ENCODE measurements at regions of chr1 and their contacts with region 1.

Region 1: DNA sequence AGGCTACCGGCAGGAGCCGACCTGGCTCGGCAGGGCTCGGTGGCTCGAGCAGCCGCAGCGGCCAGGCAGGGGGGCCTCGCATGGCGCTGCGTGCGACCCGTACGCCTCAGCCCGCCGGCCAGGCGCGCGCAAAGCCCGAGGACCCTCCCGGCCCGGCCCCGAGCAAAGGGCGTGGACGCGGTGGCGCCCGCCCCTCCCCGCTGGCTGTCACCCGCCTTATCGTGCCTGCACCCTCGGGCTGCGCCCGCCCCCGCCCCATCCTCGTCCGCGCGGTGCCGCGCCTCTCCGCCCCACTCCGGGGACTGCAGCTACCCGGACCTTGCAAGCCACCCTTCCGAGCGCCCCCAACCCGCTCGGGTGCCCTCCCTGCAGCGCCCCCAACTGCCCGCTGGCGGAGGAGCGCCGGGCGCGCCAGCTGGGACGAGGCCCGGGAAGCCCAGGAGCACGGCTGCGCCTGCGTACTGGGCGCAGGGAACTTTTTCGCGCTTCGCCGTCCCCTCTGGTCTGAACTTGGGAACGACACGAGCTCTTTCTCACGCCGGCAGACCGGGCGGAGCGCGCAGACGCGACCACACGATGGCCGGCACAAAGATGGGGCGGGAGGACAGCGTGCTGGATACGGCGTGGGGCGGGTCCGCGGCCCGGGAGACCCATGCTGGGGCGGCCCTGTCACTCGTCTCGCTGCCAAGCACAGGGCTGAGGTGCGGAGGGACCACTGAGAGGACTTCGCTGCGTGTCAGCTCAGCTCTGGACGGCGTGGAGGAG is at the start of gene ABCB10:
- DNase-seq: peak; percentile 98
- H3K4me3 ChIP-seq: peak within 1 kb of the TSS; percentile 72 to 90
- H3K27ac ChIP-seq: peak within 1 kb of the TSS; percentile 65 to 75
- H3K4me1 ChIP-seq: peaks cover 0 to 14% of the 10 kb centered on the region in 2 experiments; a peak in 2 of 4 replicates
- H3K27me3 ChIP-seq: no peaks in the 10 kb centered on the region
- CTCF ChIP-seq: peak; percentile 84
- EP300 ChIP-seq: no peak; a peak in 1 of 4 replicates
- RAD21 ChIP-seq: 0 out of 2 replicates have a peak, but pooled peaks have one; percentile 35
- polyA plus RNA-seq, gene ABCB10: 5.7 and 7.4 TPM in 2 replicates

Region 2: DNA sequence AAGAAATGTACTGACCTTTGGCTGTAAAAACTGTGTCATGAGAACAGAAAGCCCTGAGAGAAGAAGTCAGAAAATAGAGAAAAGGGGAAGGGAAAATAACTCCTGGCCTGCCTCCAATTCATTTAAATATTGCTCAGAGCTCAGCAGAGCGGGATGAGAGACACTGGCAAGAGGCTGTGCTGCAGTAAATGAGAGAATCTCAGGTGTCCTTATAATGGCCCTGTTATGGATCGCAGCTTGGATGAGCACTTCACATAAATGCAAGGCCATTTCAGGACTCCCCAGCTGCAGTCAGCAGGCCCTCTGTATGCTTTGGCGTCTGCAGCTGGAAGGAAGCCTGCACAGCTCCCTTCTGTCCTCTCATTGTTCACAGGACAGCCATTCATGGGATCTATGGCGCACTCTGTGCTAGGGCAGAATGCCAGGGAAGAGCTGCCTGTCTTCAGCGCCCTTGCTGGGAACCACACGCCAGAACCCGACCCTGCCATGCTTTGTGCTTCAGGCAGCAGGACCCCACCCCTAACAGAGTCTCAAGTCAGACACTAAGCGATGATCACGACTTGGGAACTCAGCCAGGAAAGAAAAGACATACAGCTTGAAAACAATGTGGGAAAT is 20.4 kb after region 1 on chr1:
- CTCF ChIA-PET with region 1: interaction called, 12 read pairs
- POLR2A ChIA-PET with region 1: no interaction called
- DNase-seq: peak; percentile 58
- H3K4me3 ChIP-seq: no peak overlapping the region
- H3K27ac ChIP-seq: no peak overlapping the region; a peak in 1 of 4 replicates
- H3K4me1 ChIP-seq: peaks cover 0 to 8% of the 10 kb centered on the region in 2 experiments; a peak in 1 of 4 replicates
- H3K27me3 ChIP-seq: no peaks in the 10 kb centered on the region
- CTCF ChIP-seq: no peak
- EP300 ChIP-seq: no peak
- RAD21 ChIP-seq: no peak

Region 3: DNA sequence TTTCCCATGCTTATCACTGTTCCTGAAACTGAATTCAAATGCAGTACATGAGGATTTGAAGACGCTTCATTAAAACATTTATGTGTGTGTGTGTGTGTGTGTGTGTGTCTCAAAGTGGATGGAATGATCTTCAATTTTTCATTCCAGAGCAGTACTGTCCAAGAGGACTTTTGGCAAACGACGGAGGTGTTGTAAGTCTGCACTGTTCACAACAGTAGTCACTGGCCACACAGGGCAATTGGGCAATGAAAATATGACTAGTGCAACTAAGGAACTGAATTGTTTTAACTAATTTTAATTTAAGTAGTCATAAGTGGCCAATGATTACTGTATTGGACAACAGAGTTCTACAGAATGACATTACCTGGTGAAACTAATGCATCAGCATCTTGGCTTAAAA is 62.1 kb after region 1 on chr1:
- CTCF ChIA-PET with region 1: interaction called, 42 read pairs
- POLR2A ChIA-PET with region 1: interaction called, 9 read pairs
- DNase-seq: no peak
- H3K4me3 ChIP-seq: no peak overlapping the region
- H3K27ac ChIP-seq: no peak overlapping the region
- H3K4me1 ChIP-seq: peaks cover 0 to 13% of the 10 kb centered on the region in 2 experiments; a peak in 3 of 4 replicates
- H3K27me3 ChIP-seq: no peaks in the 10 kb centered on the region
- CTCF ChIP-seq: no peak
- EP300 ChIP-seq: no peak
- RAD21 ChIP-seq: no peak

Region 4: DNA sequence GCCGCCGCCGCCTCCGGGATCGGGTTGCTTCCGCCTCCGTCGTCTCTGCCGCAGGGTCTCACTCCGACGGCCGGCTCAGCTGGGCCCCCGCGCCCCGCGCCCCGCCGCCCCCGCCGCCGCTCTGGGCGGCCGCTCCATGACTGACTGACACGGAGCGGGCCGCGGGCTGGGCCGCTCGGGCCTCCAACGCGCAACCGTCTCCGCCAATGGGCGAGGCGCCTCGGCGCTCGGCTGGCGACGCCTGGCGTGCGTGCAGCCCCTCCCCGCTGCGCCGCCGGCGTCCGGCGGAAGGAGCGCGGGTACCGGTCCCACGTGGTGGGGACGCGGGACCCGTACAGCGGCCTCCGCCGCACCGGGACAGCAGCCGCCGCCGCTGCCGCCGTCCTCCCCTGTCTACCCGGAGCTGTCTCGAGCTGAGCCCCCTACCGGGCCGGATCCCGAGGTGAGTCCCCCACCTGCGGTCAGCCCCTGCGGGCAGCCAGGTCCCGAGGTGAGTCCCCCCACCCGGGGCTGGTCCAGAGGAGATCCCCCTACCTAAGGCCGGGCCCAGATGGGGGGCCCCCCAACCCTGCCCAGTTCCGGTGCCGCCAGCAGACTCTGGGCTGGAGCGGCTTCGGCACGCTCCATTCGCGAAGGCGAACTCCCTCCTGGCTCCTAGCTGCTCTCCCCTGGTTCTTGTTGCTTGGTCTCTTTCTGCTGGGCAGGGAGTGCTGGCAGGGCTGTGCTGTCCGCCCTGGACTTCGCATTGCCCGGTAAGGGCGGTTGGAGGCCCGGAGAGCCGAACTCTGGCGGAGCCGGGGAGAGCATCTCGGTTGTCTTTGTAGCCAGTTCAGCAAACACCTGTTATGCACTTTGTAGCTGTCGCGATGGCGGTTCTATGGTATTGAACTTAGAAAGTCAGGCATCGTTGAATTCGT is 67.4 kb after region 1 on chr1 and contains the starts of genes TAF5L and URB2:
- CTCF ChIA-PET with region 1: interaction called, 42 read pairs
- POLR2A ChIA-PET with region 1: interaction called, 9 read pairs
- DNase-seq: peak; percentile 97
- H3K4me3 ChIP-seq: peak within 1 kb of the TSS; percentile 98 to 99
- H3K27ac ChIP-seq: peak within 1 kb of the TSS; percentile 58 to 84; a peak in 3 of 4 replicates
- H3K4me1 ChIP-seq: peaks cover 5 to 22% of the 10 kb centered on the region in 2 experiments; a peak in 3 of 4 replicates
- H3K27me3 ChIP-seq: no peaks in the 10 kb centered on the region
- CTCF ChIP-seq: no peak
- EP300 ChIP-seq: no peak; a peak in 1 of 4 replicates
- RAD21 ChIP-seq: no peak
- polyA plus RNA-seq, gene TAF5L: 17.1 and 19.1 TPM in 2 replicates
- polyA plus RNA-seq, gene URB2: 8.2 and 11.3 TPM in 2 replicates

Region 5: GRCh38 chr1:229640455-229640854 is 81.7 kb after region 1 on chr1:
- CTCF ChIA-PET with region 1: interaction called, 10 read pairs
- POLR2A ChIA-PET with region 1: no interaction called
- DNase-seq: no peak
- H3K4me3 ChIP-seq: no peak overlapping the region
- H3K27ac ChIP-seq: no peak overlapping the region
- H3K4me1 ChIP-seq: peaks cover 0 to 10% of the 10 kb centered on the region in 2 experiments; a peak in 1 of 4 replicates
- H3K27me3 ChIP-seq: no peaks in the 10 kb centered on the region
- CTCF ChIP-seq: no peak
- EP300 ChIP-seq: no peak
- RAD21 ChIP-seq: no peak